CD8-positive, alpha-beta T cell (primary cell): ENCODE measurements at regions of chr11 and their contacts with region 1.

Region 1: GRCh38 chr11:108177570-108177969 is 44.9 kb downstream of the NPAT start:
- DNase-seq: no peak
- ATAC-seq: no peak
- H3K4me3 ChIP-seq: no peak overlapping the region
- H3K4me3 Mint-ChIP-seq: no peak overlapping the region
- H3K27ac ChIP-seq: no peak overlapping the region
- H3K27ac Mint-ChIP-seq: no peak overlapping the region
- H3K4me1 ChIP-seq: no peaks in the 10 kb centered on the region
- H3K4me1 Mint-ChIP-seq: peaks cover 16% of the 10 kb centered on the region
- H3K27me3 ChIP-seq: no peaks in the 10 kb centered on the region
- H3K27me3 Mint-ChIP-seq: no peaks in the 10 kb centered on the region
- CTCF ChIP-seq: no peak

Region 2: DNA sequence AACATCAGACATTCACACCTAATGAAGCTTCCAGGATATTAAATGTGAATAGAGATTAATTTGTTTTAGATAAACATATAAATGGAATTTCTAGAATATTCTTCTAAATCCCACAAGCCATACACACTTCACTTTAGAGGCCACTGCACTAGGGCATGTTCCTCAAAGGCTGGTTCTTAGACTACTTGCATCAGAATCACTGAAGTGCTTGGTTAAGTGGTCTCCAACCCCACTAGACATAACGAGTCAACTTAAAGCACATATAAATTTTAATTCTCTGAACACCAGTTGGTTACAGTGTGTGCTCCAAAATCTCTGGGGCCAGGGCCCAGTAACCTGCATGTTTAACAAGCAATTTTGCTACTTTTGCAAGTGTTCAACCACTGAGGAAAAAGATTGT is 604.1 kb before region 1 on chr11:
- CTCF ChIA-PET with region 1: no interaction called
- POLR2A ChIA-PET with region 1: no interaction called
- intact Hi-C with region 1: no loop called
- DNase-seq: no peak
- ATAC-seq: no peak
- H3K4me3 ChIP-seq: no peak overlapping the region
- H3K4me3 Mint-ChIP-seq: no peak overlapping the region
- H3K27ac ChIP-seq: no peak overlapping the region
- H3K27ac Mint-ChIP-seq: no peak overlapping the region
- H3K4me1 ChIP-seq: no peaks in the 10 kb centered on the region
- H3K4me1 Mint-ChIP-seq: no peaks in the 10 kb centered on the region
- H3K27me3 ChIP-seq: no peaks in the 10 kb centered on the region
- H3K27me3 Mint-ChIP-seq: peaks cover 4% of the 10 kb centered on the region
- CTCF ChIP-seq: no peak

Region 3: DNA sequence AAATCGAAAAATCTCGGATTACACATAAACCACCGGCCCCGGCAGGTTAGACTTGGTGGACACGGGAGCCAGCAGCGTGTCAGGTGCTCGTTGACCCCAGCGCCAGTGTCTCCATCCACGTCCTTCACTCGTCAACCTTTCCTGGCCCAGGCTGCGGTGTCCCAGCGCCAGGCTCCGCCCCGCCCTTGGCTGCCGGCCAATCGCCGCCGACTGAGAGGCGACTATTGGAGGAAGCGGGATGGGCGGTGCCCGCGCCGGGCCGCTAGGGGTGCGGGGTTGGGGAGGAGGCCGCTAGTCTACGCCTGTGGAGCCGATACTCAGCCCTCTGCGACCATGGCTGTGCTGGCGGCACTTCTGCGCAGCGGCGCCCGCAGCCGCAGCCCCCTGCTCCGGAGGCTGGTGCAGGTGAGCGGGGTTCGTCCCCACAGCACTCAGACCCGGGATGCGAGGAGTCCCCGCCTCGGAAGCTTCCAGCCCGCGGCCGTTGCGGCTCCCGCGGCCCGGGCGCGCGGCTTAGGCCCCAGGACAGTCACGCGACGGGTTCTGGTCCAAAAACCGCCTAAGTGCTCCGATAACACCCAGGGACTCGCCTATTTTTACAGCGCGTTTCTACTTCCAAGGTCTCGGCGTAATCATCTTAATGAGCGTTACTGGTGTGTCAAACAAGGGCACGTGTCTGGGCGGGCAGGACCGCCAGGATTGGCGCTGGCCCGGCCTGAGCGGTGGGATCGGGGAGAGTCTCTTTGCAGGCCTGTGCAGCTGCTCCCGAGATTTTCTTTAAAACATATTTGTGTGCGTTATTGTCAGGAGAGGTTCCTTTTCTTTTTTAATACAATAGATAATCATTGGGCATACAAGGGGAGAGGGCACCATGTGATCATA is 56.1 kb before region 1 on chr11 and contains the start of gene ACAT1:
- CTCF ChIA-PET with region 1: no interaction called
- POLR2A ChIA-PET with region 1: no interaction called
- intact Hi-C with region 1: no loop called
- DNase-seq: peak; percentile 89 to 98 (median 97)
- ATAC-seq: peak; percentile 98
- H3K4me3 ChIP-seq: peak within 1 kb of the TSS; percentile 82 to 89
- H3K4me3 Mint-ChIP-seq: peak within 1 kb of the TSS; percentile 88
- H3K27ac ChIP-seq: peak within 1 kb of the TSS; percentile 59 to 70
- H3K27ac Mint-ChIP-seq: peak within 1 kb of the TSS; percentile 78
- H3K4me1 ChIP-seq: peaks cover 31% of the 10 kb centered on the region
- H3K4me1 Mint-ChIP-seq: peaks cover 43% of the 10 kb centered on the region
- H3K27me3 ChIP-seq: no peaks in the 10 kb centered on the region
- H3K27me3 Mint-ChIP-seq: no peaks in the 10 kb centered on the region
- CTCF ChIP-seq: no peak
- total RNA-seq, gene ACAT1: 14.2 to 15.0 TPM

Region 4: GRCh38 chr11:108346451-108346850 is 168.9 kb after region 1 on chr11:
- CTCF ChIA-PET with region 1: no interaction called
- POLR2A ChIA-PET with region 1: interaction called, 4 read pairs
- intact Hi-C with region 1: loop called in 1 of 2 experiments (anchors 5 kb)
- DNase-seq: no peak
- ATAC-seq: no peak
- H3K4me3 ChIP-seq: no peak overlapping the region
- H3K4me3 Mint-ChIP-seq: no peak overlapping the region
- H3K27ac ChIP-seq: no peak overlapping the region
- H3K27ac Mint-ChIP-seq: peak overlapping the region; percentile 74
- H3K4me1 ChIP-seq: no peaks in the 10 kb centered on the region
- H3K4me1 Mint-ChIP-seq: peaks cover 34% of the 10 kb centered on the region
- H3K27me3 ChIP-seq: no peaks in the 10 kb centered on the region
- H3K27me3 Mint-ChIP-seq: no peaks in the 10 kb centered on the region
- CTCF ChIP-seq: no peak